H1 (cell line): ENCODE measurements at regions of chr3 and their contacts with region 1.

Region 1: DNA sequence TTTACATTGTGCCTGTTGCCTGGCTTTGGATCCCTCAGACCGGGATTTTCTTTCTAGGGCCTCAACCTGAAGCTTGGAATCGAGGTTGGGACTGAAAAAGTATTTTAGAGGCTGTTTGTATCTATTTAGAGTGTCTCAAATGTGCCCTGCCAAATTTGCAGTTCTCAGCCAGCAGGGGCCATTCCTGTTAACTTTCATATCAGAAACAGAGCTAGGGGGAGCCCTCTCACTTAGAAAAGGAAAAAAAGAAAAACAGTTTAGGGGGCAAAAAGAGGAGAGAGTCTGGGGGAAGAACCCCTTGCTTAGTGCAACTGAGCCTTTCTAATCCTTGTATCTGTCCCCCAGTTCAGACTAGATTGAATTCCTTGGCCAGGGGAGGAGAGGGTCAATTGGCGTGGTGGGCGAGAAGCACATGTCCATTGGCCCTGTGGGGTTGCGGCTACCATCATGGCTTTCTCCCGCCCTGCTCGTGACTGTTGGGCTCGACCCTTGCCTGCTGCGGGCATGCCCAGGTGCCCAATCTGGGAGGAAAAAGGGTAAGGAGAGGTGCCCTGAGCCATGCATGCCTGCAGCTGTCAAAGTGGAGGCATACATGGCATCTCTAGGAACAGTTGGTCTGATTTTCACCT is 101.6 kb downstream of the CFAP44 start:
- DNase-seq: peak in 1 of 2 experiments; percentile 52
- H3K4me3 ChIP-seq: no peak overlapping the region
- H3K27ac ChIP-seq: no peak overlapping the region
- H3K4me1 ChIP-seq: no peaks in the 10 kb centered on the region
- H3K27me3 ChIP-seq: no peaks in the 10 kb centered on the region
- CTCF ChIP-seq: peak in 2 of 3 experiments; percentile 46 to 89; a peak in 3 of 4 replicates
- EP300 ChIP-seq: no peak
- POLR2A ChIP-seq: no peak
- RAD21 ChIP-seq: peak; percentile 52 to 58

Region 2: GRCh38 chr3:113183748-113184661 is 155.7 kb before region 1 on chr3:
- CTCF ChIA-PET with region 1: no interaction called
- POLR2A ChIA-PET with region 1: no interaction called
- DNase-seq: no peak
- H3K4me3 ChIP-seq: no peak overlapping the region
- H3K27ac ChIP-seq: no peak overlapping the region
- H3K4me1 ChIP-seq: peaks cover 0 to 4% (median 0%) of the 10 kb centered on the region in 4 experiments; a peak in 2 of 7 replicates
- H3K27me3 ChIP-seq: peaks cover 0 to 2% (median 0%) of the 10 kb centered on the region in 4 experiments; a peak in 1 of 7 replicates
- CTCF ChIP-seq: no peak
- EP300 ChIP-seq: no peak
- POLR2A ChIP-seq: no peak
- RAD21 ChIP-seq: no peak

Region 3: DNA sequence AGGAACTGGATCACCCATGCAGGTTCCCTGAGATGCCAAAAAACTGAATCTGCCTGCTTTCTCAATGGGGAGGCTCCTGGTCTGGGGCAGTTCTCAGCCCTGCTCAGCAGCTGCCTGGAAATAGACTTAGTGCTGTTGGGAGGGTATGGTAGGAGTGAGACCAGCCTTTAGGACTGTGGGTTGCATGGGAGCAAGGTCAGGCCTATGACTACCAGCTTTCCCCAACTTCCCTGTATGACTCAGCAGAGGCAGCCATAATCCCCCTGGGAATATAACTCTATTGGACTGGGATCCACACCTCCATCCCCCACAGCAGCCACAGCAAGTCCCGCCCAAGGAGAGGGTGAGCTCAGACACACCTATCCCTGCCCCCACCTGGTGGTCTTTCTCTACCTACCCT is 14.6 kb after region 1 on chr3:
- CTCF ChIA-PET with region 1: interaction called, 11 read pairs
- POLR2A ChIA-PET with region 1: no interaction called
- DNase-seq: no peak
- H3K4me3 ChIP-seq: no peak overlapping the region
- H3K27ac ChIP-seq: no peak overlapping the region
- H3K4me1 ChIP-seq: no peaks in the 10 kb centered on the region
- H3K27me3 ChIP-seq: no peaks in the 10 kb centered on the region
- CTCF ChIP-seq: no peak
- EP300 ChIP-seq: no peak
- POLR2A ChIP-seq: no peak
- RAD21 ChIP-seq: no peak

Region 4: DNA sequence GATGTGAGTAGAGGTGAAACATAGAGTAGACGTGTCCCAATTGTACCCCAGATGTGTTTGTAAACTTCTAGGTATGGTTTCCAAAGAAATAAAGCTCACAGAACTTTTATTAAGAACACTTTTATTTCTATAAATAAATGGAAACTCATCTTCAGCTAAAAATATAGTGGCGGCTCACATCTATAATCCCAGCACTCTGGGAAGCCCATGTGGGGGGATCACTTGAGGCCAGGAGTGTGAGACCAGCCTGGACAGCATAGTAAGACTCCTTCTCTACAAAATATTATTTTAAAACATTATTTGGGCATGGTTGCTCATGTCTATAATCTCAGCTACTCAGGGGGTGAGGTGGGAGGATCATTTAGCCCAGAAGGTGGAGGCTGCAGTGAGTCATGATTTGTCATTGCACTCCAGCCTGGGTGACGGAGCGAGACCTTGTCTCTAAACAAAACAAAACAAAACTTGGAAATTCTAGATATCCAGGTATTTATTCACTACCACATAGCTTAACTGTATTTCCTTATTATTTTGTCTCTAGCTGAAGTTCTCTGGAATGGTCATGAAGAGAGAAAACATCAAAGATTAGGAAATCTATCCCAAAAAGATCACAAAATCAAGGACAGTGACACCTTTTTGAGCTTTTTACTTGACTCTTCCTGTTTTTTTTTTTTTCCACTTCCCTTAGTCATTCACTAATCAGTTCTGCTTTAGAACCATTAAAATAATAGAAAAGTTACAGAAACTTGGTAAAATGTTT is 1212.2 kb after region 1 on chr3:
- CTCF ChIA-PET with region 1: no interaction called
- POLR2A ChIA-PET with region 1: no interaction called
- DNase-seq: no peak
- H3K4me3 ChIP-seq: no peak overlapping the region
- H3K27ac ChIP-seq: no peak overlapping the region
- H3K4me1 ChIP-seq: no peaks in the 10 kb centered on the region
- H3K27me3 ChIP-seq: peaks cover 0 to 1% (median 0%) of the 10 kb centered on the region in 4 experiments; a peak in 1 of 7 replicates
- CTCF ChIP-seq: no peak
- EP300 ChIP-seq: no peak
- POLR2A ChIP-seq: no peak
- RAD21 ChIP-seq: no peak